ENCODE measurements at regions of chr7 and their contacts with region 1.

Region 1: GRCh38 chr7:128904381-128905197 is 5.9 kb downstream of the KCP start:
- DNase-seq: peak; percentile 53
- H3K4me3 ChIP-seq: no peak overlapping the region
- H3K27ac ChIP-seq: no peak overlapping the region
- H3K4me1 ChIP-seq: no peaks in the 10 kb centered on the region
- H3K27me3 ChIP-seq: peaks cover 11% of the 10 kb centered on the region in 2 experiments
- CTCF ChIP-seq: peak; percentile 48 to 54
- POLR2A ChIP-seq: no peak

Region 2: DNA sequence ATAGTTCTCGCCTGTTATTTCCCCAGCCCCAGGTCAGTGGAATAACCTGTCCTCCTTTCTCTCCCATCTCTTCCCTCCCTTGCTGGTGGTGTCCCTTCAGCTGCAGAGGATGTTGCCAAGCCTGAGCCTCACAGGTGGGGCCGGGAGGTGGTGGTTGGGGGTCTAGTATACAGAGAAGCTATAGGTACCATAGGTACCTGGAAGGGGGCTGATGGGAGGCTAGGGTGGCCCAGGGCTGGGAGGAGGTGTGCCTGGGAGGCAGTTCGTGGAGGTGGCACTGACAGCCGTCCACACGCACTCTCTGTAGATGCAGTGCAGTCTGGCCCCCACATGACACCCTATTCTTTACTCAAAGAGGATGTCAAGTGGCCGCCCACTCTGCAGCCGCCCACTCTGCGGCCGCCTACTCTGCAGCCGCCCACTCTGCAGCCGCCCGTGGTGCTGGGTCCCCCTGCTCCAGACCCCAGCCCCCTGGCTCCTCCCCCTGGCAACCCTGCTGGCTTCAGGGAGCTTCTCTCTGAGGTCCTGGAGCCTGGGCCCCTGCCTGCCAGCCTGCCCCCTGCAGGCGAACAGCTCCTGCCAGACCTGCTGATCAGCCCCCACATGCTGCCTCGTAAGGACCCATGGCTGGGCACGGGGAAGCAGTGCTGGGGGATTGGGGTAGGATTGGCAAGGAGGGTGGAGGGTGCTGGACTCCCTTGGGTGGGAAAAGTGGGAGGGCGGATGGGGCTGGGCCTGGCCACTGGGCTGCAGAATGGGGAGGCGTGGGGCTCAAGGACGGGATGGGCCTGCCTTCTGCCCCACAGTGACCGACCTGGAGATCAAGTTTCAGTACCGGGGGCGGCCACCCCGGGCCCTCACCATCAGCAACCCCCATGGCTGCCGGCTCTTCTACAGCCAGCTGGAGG is 42.6 kb after region 1 on chr7:
- CTCF ChIA-PET with region 1: interaction called, 6 read pairs
- POLR2A ChIA-PET with region 1: no interaction called
- dilution Hi-C with region 1: no loop called
- intact Hi-C with region 1: loop called (anchors 1 kb)
- DNase-seq: no peak
- H3K4me3 ChIP-seq: no peak overlapping the region
- H3K27ac ChIP-seq: no peak overlapping the region
- H3K4me1 ChIP-seq: no peaks in the 10 kb centered on the region
- H3K27me3 ChIP-seq: no peaks in the 10 kb centered on the region
- CTCF ChIP-seq: peak in 1 of 2 donors; percentile 10
- POLR2A ChIP-seq: no peak

Region 3: GRCh38 chr7:129210256-129210988 is 305.8 kb after region 1 on chr7:
- CTCF ChIA-PET with region 1: interaction called, 3 read pairs
- POLR2A ChIA-PET with region 1: no interaction called
- dilution Hi-C with region 1: no loop called
- intact Hi-C with region 1: loop called (anchors 2 kb)
- DNase-seq: peak; percentile 65
- H3K4me3 ChIP-seq: no peak overlapping the region
- H3K27ac ChIP-seq: no peak overlapping the region
- H3K4me1 ChIP-seq: no peaks in the 10 kb centered on the region
- H3K27me3 ChIP-seq: no peaks in the 10 kb centered on the region
- CTCF ChIP-seq: peak; percentile 78 to 93
- POLR2A ChIP-seq: no peak